ENCODE measurements at regions of chr11 and their contacts with region 1.

Region 1: GRCh38 chr11:62694455-62695167 is 5.3 kb upstream of the LRRN4CL start:
- DNase-seq: peak; percentile 87
- ATAC-seq: peak; percentile 84
- H3K4me3 Mint-ChIP-seq: no peak overlapping the region
- H3K27ac Mint-ChIP-seq: no peak overlapping the region
- H3K4me1 Mint-ChIP-seq: peaks cover 7% of the 10 kb centered on the region
- H3K27me3 Mint-ChIP-seq: no peaks in the 10 kb centered on the region
- CTCF ChIP-seq: peak; percentile 92

Region 2: GRCh38 chr11:62479631-62480201 is 214.9 kb before region 1 on chr11:
- CTCF ChIA-PET with region 1: no interaction called
- POLR2A ChIA-PET with region 1: no interaction called
- intact Hi-C with region 1: no loop called
- DNase-seq: no peak
- ATAC-seq: no peak
- H3K4me3 Mint-ChIP-seq: no peak overlapping the region
- H3K27ac Mint-ChIP-seq: no peak overlapping the region
- H3K4me1 Mint-ChIP-seq: no peaks in the 10 kb centered on the region
- H3K27me3 Mint-ChIP-seq: no peaks in the 10 kb centered on the region
- CTCF ChIP-seq: no peak

Region 3: GRCh38 chr11:62652161-62653006 is 42.2 kb before region 1 on chr11:
- CTCF ChIA-PET with region 1: interaction called, 10 read pairs
- POLR2A ChIA-PET with region 1: no interaction called
- intact Hi-C with region 1: no loop called
- DNase-seq: peak; percentile 48
- ATAC-seq: peak; percentile 4
- H3K4me3 Mint-ChIP-seq: peak overlapping the region; percentile 94
- H3K27ac Mint-ChIP-seq: peak overlapping the region; percentile 95
- H3K4me1 Mint-ChIP-seq: peaks cover 23% of the 10 kb centered on the region
- H3K27me3 Mint-ChIP-seq: no peaks in the 10 kb centered on the region
- CTCF ChIP-seq: no peak

Measured in activated CD8-positive, alpha-beta T cell treated with anti-CD3 and anti-CD28 coated beads for 36 hours (primary cell).